ENCODE measurements at regions of chr7 and their contacts with region 1.

Region 1: DNA sequence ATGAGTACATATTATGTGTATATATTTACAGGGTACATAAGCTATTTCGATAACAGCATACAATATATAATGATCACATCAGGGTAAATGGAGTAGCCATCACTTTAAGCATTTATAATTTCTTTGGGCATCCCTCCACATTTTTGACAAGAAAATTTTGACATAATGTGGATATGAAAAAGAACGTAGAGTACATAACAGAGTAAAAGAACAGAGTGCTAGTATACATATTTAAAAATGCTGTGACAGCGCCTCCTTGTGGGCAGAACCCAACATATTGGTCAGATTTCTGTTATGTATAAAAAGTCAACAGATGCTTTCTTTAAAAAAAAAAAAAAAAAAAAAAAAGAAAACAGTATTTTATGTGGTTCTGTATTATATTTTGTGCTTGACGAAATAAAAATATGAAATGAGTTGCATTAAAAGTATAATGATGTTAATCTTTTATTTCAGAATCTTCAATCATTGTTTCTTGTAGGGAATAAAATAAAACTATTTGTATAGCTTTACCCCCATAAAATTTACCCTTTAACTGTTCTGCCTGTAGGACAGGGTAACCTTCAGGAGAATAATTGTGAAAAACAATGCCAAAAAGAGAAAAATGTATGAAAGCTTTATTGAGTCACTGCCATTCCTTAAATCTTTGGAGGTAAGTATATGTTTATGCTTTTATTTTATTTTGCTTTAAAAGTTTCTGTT is 18.3 kb upstream of the HBP1 start:
- DNase-seq: peak in 2 of 3 donors; percentile 49 to 64
- ATAC-seq: peak; percentile 73 to 81 (median 76)
- H3K4me3 ChIP-seq: no peak overlapping the region
- H3K27ac ChIP-seq: no peak overlapping the region
- H3K4me1 ChIP-seq: peaks cover 0 to 9% (median 0%) of the 10 kb centered on the region in 4 donors
- H3K27me3 ChIP-seq: no peaks in the 10 kb centered on the region
- CTCF ChIP-seq: peak; percentile 55 to 77 (median 68)
- POLR2A ChIP-seq: no peak

Region 2: DNA sequence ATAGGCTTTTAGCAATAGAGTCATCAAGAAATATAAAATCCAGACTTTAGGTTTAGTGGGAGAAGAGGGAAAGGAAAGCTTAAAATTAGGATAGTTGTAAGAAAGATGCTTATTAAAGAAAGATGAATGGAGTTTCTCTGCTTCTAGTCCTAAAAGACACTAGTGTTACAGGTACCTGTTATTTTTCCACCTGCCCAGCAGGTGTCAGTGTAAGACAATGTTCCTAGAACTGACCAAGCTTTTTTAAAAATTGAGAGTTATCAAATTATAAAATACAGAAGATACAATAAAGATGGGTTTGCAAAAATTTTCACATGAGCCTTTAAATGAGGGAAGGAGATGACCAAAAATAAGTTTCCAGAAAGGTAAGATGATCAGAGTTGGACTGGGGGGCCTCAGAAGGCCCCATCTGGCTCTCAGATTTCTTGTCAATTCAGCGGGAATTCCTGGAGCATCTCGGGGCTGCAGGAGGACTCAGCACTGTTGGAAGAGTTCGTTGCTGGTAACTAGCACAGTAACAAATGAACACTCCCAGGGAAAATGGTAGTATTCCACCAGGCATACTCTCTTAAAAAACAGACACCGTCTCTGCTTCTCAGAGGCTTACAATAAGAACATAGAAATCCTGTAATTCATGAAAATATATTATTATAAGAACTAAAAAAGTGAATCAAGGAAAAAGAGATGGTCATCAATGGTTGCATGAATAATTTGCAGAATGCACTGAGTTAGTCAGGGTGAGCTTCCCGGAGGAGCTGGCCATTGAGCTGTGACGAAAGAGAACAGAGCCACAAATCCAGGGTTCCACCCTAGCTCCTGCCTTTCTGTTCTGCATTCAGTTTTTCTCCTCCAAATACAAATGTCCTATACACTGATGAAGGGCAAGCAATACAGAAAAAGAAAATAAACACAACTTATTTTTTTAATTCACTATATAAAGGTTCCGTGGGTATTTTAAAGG is 357.2 kb before region 1 on chr7:
- intact Hi-C with region 1: loop called (anchors 10 kb)
- DNase-seq: no peak
- ATAC-seq: peak; percentile 60 to 71 (median 68)
- H3K4me3 ChIP-seq: no peak overlapping the region
- H3K27ac ChIP-seq: no peak overlapping the region
- H3K4me1 ChIP-seq: no peaks in the 10 kb centered on the region
- H3K27me3 ChIP-seq: no peaks in the 10 kb centered on the region
- CTCF ChIP-seq: peak; percentile 63 to 76 (median 70)
- POLR2A ChIP-seq: no peak

Region 3: DNA sequence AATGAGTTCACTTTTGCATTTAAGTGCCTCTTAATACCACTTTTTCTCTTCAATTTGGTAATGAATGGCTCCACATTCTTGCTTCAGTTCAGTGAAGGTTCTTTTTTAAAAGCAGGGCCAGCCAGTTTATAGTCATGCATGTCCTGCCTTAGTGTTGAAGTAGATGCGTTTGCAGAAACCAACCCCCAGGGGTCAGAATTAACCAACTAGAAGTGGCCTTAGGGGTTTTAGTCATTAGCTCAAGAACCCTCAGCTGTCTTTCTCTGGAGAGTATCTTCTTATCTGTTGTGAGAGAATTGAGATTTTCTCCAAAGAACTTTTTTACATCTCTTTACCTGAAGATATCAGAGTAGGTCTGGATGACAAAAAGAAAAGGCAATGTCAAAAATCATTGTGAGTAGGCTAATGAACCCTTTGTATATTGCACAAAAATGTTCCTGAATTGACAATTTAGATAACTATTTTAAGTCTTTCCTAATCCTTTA is 203.2 kb before region 1 on chr7:
- intact Hi-C with region 1: loop called in 1 of 2 experiments (anchors 5 kb)
- DNase-seq: no peak
- ATAC-seq: peak; percentile 73 to 83 (median 82)
- H3K4me3 ChIP-seq: no peak overlapping the region
- H3K27ac ChIP-seq: no peak overlapping the region
- H3K4me1 ChIP-seq: no peaks in the 10 kb centered on the region
- H3K27me3 ChIP-seq: no peaks in the 10 kb centered on the region
- CTCF ChIP-seq: peak; percentile 38 to 56 (median 49)
- POLR2A ChIP-seq: no peak

Measured in right lobe of liver (tissue), 6 donors.